ENCODE measurements at regions of chr2 and their contacts with region 1.

Region 1: DNA sequence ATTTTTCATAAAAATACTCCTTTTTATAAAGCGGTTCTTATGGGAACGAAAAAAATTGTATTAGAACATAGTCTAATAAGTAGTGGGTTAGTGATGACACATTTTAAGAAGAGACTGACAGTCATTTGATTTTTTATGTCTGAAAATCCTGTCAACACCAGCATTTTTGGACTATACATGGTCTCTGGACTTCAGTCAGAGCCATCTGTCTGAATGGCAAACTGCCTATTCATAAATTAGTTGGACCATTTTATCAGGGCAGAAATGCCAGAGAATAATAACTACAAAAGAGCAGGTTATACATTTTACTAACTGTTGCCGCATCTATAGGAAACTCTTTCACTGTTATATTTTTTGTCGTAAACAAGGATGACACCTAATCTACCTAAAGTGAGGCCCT is 437.6 kb downstream of the ZNF804A start:
- DNase-seq: no peak
- ATAC-seq: no peak
- H3K4me3 ChIP-seq: no peak overlapping the region
- H3K4me3 Mint-ChIP-seq: no peak overlapping the region
- H3K27ac ChIP-seq: no peak overlapping the region
- H3K27ac Mint-ChIP-seq: no peak overlapping the region
- H3K4me1 ChIP-seq: no peaks in the 10 kb centered on the region
- H3K4me1 Mint-ChIP-seq: no peaks in the 10 kb centered on the region
- H3K27me3 ChIP-seq: no peaks in the 10 kb centered on the region
- H3K27me3 Mint-ChIP-seq: no peaks in the 10 kb centered on the region
- CTCF ChIP-seq: no peak

Region 2: DNA sequence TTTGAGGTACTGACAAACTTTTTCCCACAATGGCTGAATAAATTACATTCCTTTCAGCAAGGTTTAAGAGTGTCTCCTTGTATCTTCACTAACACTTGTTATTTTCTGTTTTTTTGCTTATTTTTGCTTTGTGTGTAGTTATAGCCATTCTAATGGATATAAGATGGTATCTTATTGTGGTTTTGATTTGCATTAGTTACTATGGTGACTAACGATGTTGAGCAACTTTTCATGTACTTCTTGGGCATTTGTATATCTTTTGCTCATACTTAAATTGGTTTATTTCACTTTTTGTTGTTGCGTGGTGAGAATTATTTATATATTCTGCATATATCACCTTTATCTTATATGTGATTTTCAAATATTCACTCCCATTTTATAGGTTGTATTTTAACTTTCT is 622.8 kb after region 1 on chr2:
- CTCF ChIA-PET with region 1: no interaction called
- POLR2A ChIA-PET with region 1: no interaction called
- intact Hi-C with region 1: loop called in 1 of 2 experiments (anchors 10 kb)
- DNase-seq: no peak
- ATAC-seq: no peak
- H3K4me3 ChIP-seq: no peak overlapping the region
- H3K4me3 Mint-ChIP-seq: no peak overlapping the region
- H3K27ac ChIP-seq: no peak overlapping the region
- H3K27ac Mint-ChIP-seq: no peak overlapping the region
- H3K4me1 ChIP-seq: no peaks in the 10 kb centered on the region
- H3K4me1 Mint-ChIP-seq: no peaks in the 10 kb centered on the region
- H3K27me3 ChIP-seq: no peaks in the 10 kb centered on the region
- H3K27me3 Mint-ChIP-seq: no peaks in the 10 kb centered on the region
- CTCF ChIP-seq: no peak